ENCODE measurements at regions of chr11 and their contacts with region 1.

Region 1: GRCh38 chr11:110429731-110430266 is at the start of gene FDX1:
- DNase-seq: peak; percentile 74 to 90 (median 82)
- ATAC-seq: peak; percentile 90
- H3K4me3 ChIP-seq: peak within 1 kb of the TSS; percentile 91
- H3K4me3 Mint-ChIP-seq: peak within 1 kb of the TSS; percentile 88 to 98 (median 98)
- H3K27ac ChIP-seq: peak within 1 kb of the TSS; percentile 87
- H3K27ac Mint-ChIP-seq: peak within 1 kb of the TSS; percentile 92 to 98 (median 97)
- H3K4me1 ChIP-seq: peaks cover 17 to 18% of the 10 kb centered on the region in 2 donors
- H3K4me1 Mint-ChIP-seq: peaks cover 19 to 53% (median 43%) of the 10 kb centered on the region in 7 donors
- H3K27me3 ChIP-seq: no peaks in the 10 kb centered on the region
- H3K27me3 Mint-ChIP-seq: no peaks in the 10 kb centered on the region
- total RNA-seq, gene FDX1: 7.7 to 11.2 (median 10.8) TPM

Region 2: GRCh38 chr11:108467091-108467823 is 1962.5 kb before region 1 on chr11 and contains the start of gene C11orf65:
- CTCF ChIA-PET with region 1: no interaction called
- POLR2A ChIA-PET with region 1: no interaction called
- intact Hi-C with region 1: loop called in 1 of 2 experiments (anchors 2 kb)
- DNase-seq: peak; percentile 88 to 97 (median 94)
- ATAC-seq: peak; percentile 98
- H3K4me3 ChIP-seq: peak within 1 kb of the TSS; percentile 81
- H3K4me3 Mint-ChIP-seq: peak within 1 kb of the TSS; percentile 93 to 100 (median 98)
- H3K27ac ChIP-seq: peak within 1 kb of the TSS; percentile 93
- H3K27ac Mint-ChIP-seq: peak within 1 kb of the TSS; percentile 98 to 100 (median 100)
- H3K4me1 ChIP-seq: peaks cover 3 to 5% of the 10 kb centered on the region in 2 donors
- H3K4me1 Mint-ChIP-seq: peaks cover 0 to 27% (median 17%) of the 10 kb centered on the region in 7 donors
- H3K27me3 ChIP-seq: no peaks in the 10 kb centered on the region
- H3K27me3 Mint-ChIP-seq: no peaks in the 10 kb centered on the region
- total RNA-seq, gene C11orf65: 0.27 to 1.5 (median 0.51) TPM

Region 3: DNA sequence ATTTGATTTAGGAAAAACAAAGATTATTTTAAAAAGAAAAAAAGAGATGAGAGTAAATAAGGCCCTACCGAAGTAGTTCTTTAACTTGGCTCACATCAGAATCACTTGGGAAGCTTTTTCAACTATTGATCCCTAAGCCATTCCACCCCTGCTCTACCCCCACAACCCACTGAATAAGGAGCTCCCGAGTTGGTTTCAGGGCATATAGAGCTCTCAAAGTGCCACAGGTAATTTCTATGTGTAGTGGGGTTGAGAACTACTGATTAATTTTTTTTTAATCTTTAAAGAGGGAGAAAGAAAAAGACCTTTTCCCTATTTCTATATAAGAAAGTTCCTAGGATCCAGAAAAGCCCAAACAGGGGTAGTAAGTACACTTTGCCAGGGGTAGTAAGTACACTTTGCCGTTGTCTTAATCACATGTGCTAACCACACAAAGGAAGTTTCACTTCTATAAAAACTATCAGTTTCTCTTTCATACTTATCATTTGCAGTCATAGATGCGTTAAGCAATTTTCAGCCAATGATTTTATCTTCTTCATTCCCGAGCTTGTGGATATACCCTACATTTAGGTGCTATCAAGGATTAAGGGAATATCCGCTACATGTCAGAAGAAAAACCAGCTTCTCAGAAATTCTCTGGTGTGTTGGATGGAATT is 445.0 kb before region 1 on chr11:
- CTCF ChIA-PET with region 1: no interaction called
- POLR2A ChIA-PET with region 1: no interaction called
- intact Hi-C with region 1: loop called in 1 of 2 experiments (anchors 1 kb)
- DNase-seq: no peak
- ATAC-seq: peak; percentile 68
- H3K4me3 ChIP-seq: no peak overlapping the region
- H3K4me3 Mint-ChIP-seq: peak overlapping the region in 2 of 10 donors; percentile 7 to 40
- H3K27ac ChIP-seq: no peak overlapping the region
- H3K27ac Mint-ChIP-seq: no peak overlapping the region
- H3K4me1 ChIP-seq: no peaks in the 10 kb centered on the region
- H3K4me1 Mint-ChIP-seq: peaks cover 0 to 16% (median 4%) of the 10 kb centered on the region in 7 donors
- H3K27me3 ChIP-seq: no peaks in the 10 kb centered on the region
- H3K27me3 Mint-ChIP-seq: peaks cover 6 to 19% (median 12%) of the 10 kb centered on the region in 5 donors

Region 4: GRCh38 chr11:110296226-110297075 is 133.3 kb before region 1 on chr11 and contains the start of gene RDX:
- CTCF ChIA-PET with region 1: interaction called, 6 read pairs
- POLR2A ChIA-PET with region 1: interaction called, 3 read pairs
- intact Hi-C with region 1: loop called (anchors 1 kb)
- DNase-seq: peak; percentile 26 to 74 (median 44)
- ATAC-seq: peak; percentile 86
- H3K4me3 ChIP-seq: peak within 1 kb of the TSS; percentile 69
- H3K4me3 Mint-ChIP-seq: peak within 1 kb of the TSS; percentile 87 to 93 (median 92)
- H3K27ac ChIP-seq: peak within 1 kb of the TSS; percentile 61
- H3K27ac Mint-ChIP-seq: peak within 1 kb of the TSS; percentile 5 to 89 (median 65)
- H3K4me1 ChIP-seq: peaks cover 0 to 6% of the 10 kb centered on the region in 2 donors
- H3K4me1 Mint-ChIP-seq: peaks cover 2 to 44% (median 32%) of the 10 kb centered on the region in 7 donors
- H3K27me3 ChIP-seq: no peaks in the 10 kb centered on the region
- H3K27me3 Mint-ChIP-seq: no peaks in the 10 kb centered on the region
- total RNA-seq, gene RDX: 14.0 to 63.6 (median 17.0) TPM

Region 5: GRCh38 chr11:111230122-111230465 is 800.3 kb after region 1 on chr11:
- CTCF ChIA-PET with region 1: interaction called, 12 read pairs
- POLR2A ChIA-PET with region 1: no interaction called
- intact Hi-C with region 1: loop called in 1 of 2 experiments (anchors 1 kb)
- DNase-seq: no peak
- ATAC-seq: peak; percentile 48
- H3K4me3 ChIP-seq: peak overlapping the region; percentile 49
- H3K4me3 Mint-ChIP-seq: peak overlapping the region; percentile 23 to 81 (median 58)
- H3K27ac ChIP-seq: no peak overlapping the region
- H3K27ac Mint-ChIP-seq: no peak overlapping the region
- H3K4me1 ChIP-seq: no peaks in the 10 kb centered on the region
- H3K4me1 Mint-ChIP-seq: peaks cover 0 to 24% (median 16%) of the 10 kb centered on the region in 7 donors
- H3K27me3 ChIP-seq: no peaks in the 10 kb centered on the region
- H3K27me3 Mint-ChIP-seq: peaks cover 20 to 27% (median 27%) of the 10 kb centered on the region in 5 donors

Region 6: DNA sequence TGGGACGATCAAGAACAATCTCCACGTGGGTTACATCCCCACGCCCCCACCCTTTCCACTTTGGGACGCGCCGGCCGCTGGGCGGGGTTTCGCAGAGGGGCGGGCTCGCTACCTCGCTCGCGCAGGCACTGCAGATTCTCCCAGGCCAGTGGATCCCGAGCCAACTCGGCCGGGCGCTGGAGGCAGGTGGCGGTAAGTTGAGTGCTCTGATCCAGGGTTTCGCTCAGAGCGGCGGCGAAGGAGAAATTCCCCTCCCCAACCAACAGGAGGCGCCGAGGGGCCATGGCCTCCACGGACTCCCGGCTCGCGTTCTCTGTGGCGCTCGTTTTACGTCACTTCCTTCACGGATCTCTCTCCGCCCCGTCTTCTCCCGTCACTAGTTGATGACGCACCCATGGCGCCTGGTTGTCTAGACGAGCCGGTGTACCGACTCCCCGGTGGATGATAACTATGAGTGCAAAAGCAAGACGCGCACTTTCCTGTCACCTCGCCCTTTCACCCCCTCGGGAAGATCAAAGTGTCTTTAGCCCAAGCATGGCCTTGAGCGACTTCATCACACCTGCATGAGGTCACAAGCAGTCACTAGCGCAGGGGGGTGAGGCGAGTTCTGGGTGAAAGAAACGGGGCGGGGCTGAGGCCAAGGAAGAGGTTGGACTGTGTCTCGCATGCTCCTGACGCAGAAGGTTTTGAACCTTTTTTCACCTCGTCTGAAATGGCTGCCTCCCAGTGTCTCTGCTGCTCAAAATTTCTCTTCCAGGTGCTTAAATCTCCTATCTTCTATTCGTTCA is 1449.2 kb after region 1 on chr11 and contains the starts of genes CFAP68 and FDXACB1:
- CTCF ChIA-PET with region 1: no interaction called
- POLR2A ChIA-PET with region 1: no interaction called
- intact Hi-C with region 1: loop called in 1 of 2 experiments (anchors 5 kb)
- DNase-seq: peak; percentile 89 to 99 (median 98)
- ATAC-seq: peak; percentile 93
- H3K4me3 ChIP-seq: peak within 1 kb of the TSS; percentile 93
- H3K4me3 Mint-ChIP-seq: peak within 1 kb of the TSS; percentile 83 to 99 (median 95)
- H3K27ac ChIP-seq: peak within 1 kb of the TSS; percentile 96
- H3K27ac Mint-ChIP-seq: peak within 1 kb of the TSS; percentile 98 to 100 (median 100)
- H3K4me1 ChIP-seq: peaks cover 7% of the 10 kb centered on the region in 2 donors
- H3K4me1 Mint-ChIP-seq: peaks cover 9 to 32% (median 26%) of the 10 kb centered on the region in 7 donors
- H3K27me3 ChIP-seq: no peaks in the 10 kb centered on the region
- H3K27me3 Mint-ChIP-seq: no peaks in the 10 kb centered on the region
- total RNA-seq, gene CFAP68: 13.7 to 24.9 (median 18.3) TPM
- total RNA-seq, gene FDXACB1: 2.7 to 6.0 (median 5.3) TPM